Uterus (tissue), 4 donors: ENCODE measurements at regions of chr6 and their contacts with region 1.

Region 1: DNA sequence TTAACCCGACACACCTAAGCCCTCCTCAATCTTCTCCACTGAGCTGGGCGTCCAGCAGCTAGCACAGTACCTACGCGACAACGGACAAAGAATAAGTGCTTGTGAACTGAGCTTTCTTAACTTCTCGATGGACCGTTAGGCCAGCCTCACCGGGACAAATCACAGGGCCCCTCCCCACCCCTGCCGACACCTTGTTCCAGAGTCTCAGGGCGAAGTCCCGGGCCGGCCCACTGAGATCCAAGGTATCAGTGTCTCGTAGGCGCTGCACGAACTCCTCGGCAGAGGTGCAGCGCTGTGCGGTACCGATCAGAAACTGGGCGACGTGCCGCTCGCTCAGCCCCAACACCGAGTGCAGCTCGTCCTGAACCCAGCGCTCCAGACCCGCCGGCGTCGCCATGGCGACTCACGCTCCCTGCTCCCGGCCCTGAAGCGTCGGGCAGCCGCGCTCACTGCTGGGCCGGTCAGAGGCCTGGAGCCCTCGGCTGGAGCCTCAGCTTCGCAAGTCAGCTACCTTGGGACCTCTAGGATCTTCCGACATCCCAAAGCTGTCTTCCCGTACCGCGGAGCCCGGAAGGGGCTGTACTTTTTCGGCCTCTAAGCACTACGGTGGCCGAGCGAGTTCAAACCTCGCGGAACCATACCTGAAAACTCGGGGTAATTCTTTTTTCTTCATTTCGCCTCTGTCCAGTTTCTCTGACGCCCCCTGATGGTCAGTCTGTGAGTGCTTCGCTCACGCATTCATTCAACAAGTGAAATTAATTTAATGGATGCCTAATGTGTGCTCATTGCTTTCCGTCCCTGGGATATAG is at the start of gene DHX16:
- DNase-seq: peak; percentile 96 to 98
- H3K4me3 ChIP-seq: peak within 1 kb of the TSS; percentile 79 to 97
- H3K27ac ChIP-seq: peak within 1 kb of the TSS; percentile 73 to 79
- H3K4me1 ChIP-seq: peaks cover 0 to 3% of the 10 kb centered on the region in 2 donors
- H3K27me3 ChIP-seq: no peaks in the 10 kb centered on the region
- CTCF ChIP-seq: peak; percentile 90 to 97 (median 92)
- POLR2A ChIP-seq: peak in 1 of 2 donors; percentile 36
- total RNA-seq, gene DHX16: 3.2 to 31.8 (median 16.3) TPM

Region 2: DNA sequence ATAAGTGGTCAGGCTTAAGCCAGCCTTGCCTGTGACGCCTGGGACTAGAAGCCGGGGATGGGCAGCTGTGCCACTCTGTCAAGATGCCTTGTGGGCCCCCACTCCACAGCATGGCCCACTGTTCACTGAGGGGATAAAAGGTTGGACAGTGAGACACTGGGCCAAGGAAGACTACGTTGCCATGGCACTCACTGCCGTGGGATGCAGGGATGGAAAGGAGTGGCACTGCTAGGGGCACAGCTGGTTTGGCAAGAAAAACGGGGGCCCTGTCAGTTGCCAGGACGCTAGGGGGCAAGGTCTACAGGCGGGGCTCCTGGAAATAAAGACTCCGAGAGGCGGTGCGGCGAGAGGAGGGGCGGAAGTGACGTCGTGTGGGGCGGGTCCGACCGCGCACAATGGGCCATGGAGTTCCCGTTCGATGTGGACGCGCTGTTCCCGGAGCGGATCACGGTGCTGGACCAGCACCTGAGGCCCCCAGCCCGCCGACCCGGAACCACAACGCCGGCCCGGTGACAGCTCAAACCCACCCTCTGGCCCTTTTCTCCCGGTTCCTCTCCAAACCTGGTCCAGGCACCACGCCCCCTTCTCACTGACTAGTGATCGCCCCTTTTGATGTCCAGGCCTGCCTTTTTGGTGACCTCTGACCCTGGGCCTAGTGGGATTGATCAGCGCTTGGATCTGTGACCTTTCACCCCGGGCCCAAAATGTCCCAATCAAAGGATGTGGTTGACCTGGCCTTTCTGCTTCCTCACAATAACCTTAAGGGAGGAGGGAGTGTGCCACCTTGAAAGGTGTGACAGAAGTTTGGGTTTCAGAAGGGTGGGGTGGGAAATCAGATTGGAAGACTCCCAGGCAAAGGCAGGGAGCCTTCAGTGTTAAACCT is 45.9 kb before region 1 on chr6 and contains the start of gene ATAT1:
- intact Hi-C with region 1: loop called (anchors 5 kb)
- DNase-seq: peak; percentile 88 to 89
- H3K4me3 ChIP-seq: peak within 1 kb of the TSS; percentile 35 to 41
- H3K27ac ChIP-seq: peak within 1 kb of the TSS; percentile 80 to 87
- H3K4me1 ChIP-seq: peaks cover 0 to 8% of the 10 kb centered on the region in 2 donors
- H3K27me3 ChIP-seq: no peaks in the 10 kb centered on the region
- CTCF ChIP-seq: peak; percentile 37 to 61 (median 50)
- POLR2A ChIP-seq: peak; percentile 17 to 57
- total RNA-seq, gene ATAT1: 8.5 to 10.2 (median 10.1) TPM in 3 of 4 donors, not detected in the other

Region 3: GRCh38 chr6:30836431-30836866 is 163.8 kb after region 1 on chr6:
- intact Hi-C with region 1: no loop called
- DNase-seq: peak in 1 of 2 donors; percentile 37
- H3K4me3 ChIP-seq: no peak overlapping the region
- H3K27ac ChIP-seq: peak overlapping the region in 1 of 2 donors; percentile 12
- H3K4me1 ChIP-seq: no peaks in the 10 kb centered on the region
- H3K27me3 ChIP-seq: no peaks in the 10 kb centered on the region
- CTCF ChIP-seq: no peak
- POLR2A ChIP-seq: no peak

Region 4: DNA sequence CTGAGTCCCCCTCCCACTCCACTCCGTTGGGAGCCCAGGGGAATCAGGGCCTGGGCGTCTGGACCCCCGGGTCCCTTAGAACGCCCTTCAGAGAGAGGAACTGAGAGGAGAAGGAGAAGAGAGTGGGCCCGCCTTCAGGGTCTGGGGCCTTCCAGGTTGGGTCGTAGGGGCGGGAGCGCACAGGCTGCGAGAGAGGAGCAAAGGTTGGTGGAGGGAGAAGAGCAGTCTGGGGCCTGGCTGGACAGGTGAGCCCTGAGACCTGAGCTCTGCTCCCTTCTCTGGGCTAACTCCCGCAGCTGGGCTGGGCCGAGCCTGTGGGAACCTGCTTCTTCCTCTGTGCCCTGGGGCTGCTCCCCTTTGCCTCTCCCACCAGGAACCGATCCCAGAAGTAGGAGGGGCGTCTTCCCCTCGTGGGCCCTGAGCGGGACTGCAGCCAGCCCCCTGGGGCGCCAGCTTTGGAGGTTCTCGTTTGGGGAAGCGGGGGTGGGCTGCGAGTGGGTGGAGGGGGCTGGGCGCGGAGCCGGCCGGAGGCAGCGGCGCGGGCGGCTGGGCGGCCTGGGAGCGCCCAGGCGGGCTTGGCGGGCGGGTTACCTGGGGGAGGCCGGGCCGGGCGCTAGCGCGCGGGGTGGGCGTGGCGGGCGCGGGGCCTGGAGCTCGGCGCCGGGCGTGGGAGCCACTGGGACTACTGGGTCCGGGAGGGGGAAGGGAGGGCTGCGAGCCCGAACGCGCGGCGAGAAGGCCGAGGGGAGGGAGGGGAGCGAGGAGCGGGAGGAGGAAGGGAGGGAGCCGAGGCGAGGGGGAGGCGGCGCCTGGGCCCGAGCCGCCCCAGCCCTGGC is 211.3 kb after region 1 on chr6 and contains the start of gene DDR1:
- intact Hi-C with region 1: loop called (anchors 10 kb)
- DNase-seq: peak; percentile 84 to 89
- H3K4me3 ChIP-seq: peak within 1 kb of the TSS; percentile 37 to 86
- H3K27ac ChIP-seq: peak within 1 kb of the TSS; percentile 88 to 98
- H3K4me1 ChIP-seq: peaks cover 0 to 22% of the 10 kb centered on the region in 2 donors
- H3K27me3 ChIP-seq: no peaks in the 10 kb centered on the region
- CTCF ChIP-seq: no peak
- POLR2A ChIP-seq: no peak
- total RNA-seq, gene DDR1: 2.1 to 74.1 (median 30.3) TPM